A673 (cell line): ENCODE measurements at regions of chr5 and their contacts with region 1.

Region 1: DNA sequence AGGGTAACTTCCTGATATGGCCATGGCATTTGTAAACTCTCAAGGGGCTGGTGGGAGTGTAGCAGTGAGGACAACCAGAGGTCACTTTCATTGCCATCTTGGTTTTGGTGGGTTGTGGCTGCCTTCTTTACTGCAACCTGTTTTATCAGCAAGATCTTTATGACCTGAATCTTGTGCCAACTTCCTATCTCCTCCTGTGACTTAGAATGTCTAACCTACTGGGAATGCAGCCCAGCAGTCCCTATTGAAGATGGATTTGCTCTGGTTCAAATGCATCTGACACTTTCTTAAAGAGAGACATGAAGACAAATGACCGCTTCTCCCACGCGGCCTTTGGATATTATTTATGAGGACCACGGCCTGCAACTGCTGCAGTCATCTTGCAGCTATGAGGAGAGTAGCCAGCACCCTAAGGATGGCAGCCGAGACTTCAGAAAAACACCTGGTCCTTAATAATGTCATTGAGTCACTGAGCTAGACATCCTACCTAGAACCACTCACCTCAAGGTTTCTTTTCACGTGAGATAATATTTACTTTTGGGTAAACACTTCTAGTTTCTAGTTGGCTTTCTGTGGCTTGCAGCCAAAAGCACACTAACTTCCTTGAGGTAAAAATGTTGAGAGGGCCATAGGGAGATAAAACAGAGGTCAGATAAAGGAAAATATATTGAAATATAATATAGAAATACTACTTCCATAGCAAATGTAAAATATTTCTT is 28.2 kb downstream of the CETN3 start:
- DNase-seq: no peak
- H3K4me3 ChIP-seq: no peak overlapping the region
- H3K27ac ChIP-seq: no peak overlapping the region
- H3K4me1 ChIP-seq: no peaks in the 10 kb centered on the region
- H3K27me3 ChIP-seq: no peaks in the 10 kb centered on the region
- CTCF ChIP-seq: no peak

Region 2: DNA sequence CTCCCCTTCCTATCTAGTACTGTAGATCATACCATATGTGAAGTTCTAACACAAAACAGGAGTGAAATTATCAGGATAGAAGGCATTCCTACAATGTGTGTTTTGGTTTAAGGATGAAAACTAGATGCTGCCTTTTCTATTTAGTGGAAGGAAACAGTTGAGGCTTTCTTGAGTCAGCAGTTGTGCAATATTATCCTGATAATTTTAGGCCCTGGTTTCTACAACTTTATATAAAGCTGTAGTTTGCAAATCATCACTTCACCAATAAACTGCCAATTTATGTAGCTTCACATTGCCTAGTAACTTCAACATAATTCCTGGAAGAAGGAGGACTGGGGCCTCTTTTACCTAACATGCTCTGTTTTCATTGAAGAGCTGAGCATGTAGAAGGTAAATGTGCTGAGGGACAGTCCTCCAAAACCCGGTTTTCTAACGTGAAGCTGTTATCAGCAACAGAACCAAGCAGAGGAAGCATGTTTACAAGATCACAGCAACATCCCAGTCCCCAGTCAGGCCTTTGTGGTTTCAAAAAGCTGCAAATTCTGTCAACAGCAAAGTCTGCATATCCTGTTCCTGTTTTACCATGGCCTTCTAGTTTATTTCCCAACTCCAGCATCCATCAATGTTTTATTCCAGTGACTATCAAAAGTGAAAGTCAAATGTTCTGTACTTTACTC is 985.0 kb before region 1 on chr5:
- CTCF ChIA-PET with region 1: no interaction called
- POLR2A ChIA-PET with region 1: no interaction called
- intact Hi-C with region 1: no loop called
- DNase-seq: no peak
- H3K4me3 ChIP-seq: no peak overlapping the region
- H3K27ac ChIP-seq: no peak overlapping the region
- H3K4me1 ChIP-seq: no peaks in the 10 kb centered on the region
- H3K27me3 ChIP-seq: no peaks in the 10 kb centered on the region
- CTCF ChIP-seq: no peak

Region 3: DNA sequence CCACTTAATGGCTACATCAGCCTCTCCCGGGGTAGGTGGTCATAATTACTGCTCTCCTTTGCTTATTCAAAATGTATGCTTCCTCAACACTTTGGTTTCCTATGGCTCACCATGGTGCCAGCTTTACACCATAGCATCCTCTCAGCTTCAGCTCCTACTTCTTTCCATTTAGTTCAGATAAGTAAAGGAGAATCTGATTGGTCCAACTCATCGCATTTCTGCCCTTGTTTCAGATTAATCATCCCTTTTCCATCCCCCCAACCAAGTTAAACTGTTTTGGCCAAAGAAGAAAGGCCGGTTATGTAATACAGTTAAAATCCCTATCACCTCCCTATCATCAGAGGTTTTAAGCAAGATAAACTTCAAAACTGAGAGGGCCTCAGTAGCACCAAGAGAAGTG is 102.3 kb before region 1 on chr5:
- CTCF ChIA-PET with region 1: no interaction called
- POLR2A ChIA-PET with region 1: no interaction called
- intact Hi-C with region 1: loop called (anchors 5 kb)
- DNase-seq: peak; percentile 12
- H3K4me3 ChIP-seq: no peak overlapping the region
- H3K27ac ChIP-seq: no peak overlapping the region
- H3K4me1 ChIP-seq: no peaks in the 10 kb centered on the region
- H3K27me3 ChIP-seq: peaks cover 32% of the 10 kb centered on the region
- CTCF ChIP-seq: no peak